ENCODE measurements at regions of chr12 and their contacts with region 1.

Region 1: GRCh38 chr12:49232940-49233841 is 31.7 kb upstream of the TUBA1C start:
- DNase-seq: no peak
- H3K4me3 ChIP-seq: peak overlapping the region in 1 of 2 donors; percentile 18
- H3K27ac ChIP-seq: peak overlapping the region; percentile 96
- H3K4me1 ChIP-seq: peaks cover 24% of the 10 kb centered on the region
- H3K27me3 ChIP-seq: no peaks in the 10 kb centered on the region
- CTCF ChIP-seq: no peak
- POLR2A ChIP-seq: no peak

Region 2: DNA sequence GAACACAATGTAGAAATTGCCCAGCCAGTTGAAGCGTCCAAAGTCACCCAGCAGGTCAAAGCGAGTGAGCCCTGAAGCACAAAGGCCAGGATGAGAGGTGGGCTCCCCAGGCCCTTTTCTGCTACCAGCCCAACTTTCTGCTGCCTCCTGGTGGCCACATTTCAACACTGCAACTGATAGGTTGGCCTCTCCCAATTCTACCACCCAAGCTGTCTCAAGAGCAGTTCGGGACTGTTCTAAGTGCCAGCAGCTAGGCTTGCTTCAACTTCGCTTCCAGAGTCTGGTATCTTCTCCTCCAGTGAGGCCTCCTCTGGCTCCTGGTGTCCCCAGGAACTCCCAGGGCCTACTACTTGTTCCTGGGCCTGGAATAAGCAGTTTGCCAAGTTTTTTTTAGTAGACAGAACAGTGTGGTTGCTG is 135.1 kb before region 1 on chr12:
- intact Hi-C with region 1: loop called (anchors 10 kb)
- DNase-seq: no peak
- H3K4me3 ChIP-seq: no peak overlapping the region
- H3K27ac ChIP-seq: no peak overlapping the region
- H3K4me1 ChIP-seq: peaks cover 21% of the 10 kb centered on the region
- H3K27me3 ChIP-seq: no peaks in the 10 kb centered on the region
- CTCF ChIP-seq: peak; percentile 36 to 64 (median 55)
- POLR2A ChIP-seq: no peak

Region 3: DNA sequence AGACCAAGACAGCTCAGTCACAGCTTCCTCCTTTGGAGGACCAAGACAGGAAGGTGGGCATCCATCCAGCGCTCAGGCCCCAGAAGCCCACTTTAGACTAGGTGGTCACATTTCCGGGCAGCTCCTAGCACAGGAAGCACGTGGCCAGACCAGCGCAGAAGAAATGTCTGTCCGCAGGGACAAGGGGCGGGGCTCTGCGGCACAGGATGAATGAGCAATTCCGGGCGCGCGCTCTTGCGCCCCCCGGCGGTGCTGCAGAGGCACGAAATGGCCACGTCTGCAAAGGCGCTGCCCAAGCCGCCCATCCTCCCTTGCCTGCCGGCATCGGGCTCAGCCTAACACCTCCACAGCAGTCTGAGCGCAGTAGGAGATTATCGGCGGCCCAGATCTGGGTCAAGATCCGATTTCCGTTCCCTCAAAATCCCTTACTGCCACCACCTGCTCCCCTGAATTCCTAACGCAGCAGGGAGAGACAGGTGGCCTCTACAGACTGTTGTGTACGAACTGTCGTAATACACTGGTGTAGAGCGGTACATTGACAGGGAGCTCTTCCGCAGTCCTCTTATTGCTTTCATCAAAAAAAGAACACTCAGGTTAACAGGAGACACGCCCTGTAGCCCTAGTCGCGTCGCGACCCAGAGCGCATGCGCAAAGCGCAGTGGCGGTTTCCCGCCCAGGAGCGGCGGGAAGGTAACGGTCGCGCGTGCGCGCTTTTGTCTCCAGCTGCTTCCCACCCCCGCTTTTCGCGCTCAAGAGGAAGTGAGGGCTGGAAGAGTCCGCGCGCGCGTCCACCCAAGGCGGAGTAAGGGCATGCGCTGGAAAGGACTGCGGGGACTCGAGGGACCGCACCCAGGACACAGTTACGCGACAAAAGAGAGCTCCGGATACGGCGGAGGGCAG is 102.8 kb before region 1 on chr12:
- intact Hi-C with region 1: loop called (anchors 2 kb)
- DNase-seq: peak in 1 of 2 donors; percentile 94
- H3K4me3 ChIP-seq: peak overlapping the region; percentile 83 to 92
- H3K27ac ChIP-seq: peak overlapping the region; percentile 98
- H3K4me1 ChIP-seq: peaks cover 36% of the 10 kb centered on the region
- H3K27me3 ChIP-seq: no peaks in the 10 kb centered on the region
- CTCF ChIP-seq: peak; percentile 61 to 81 (median 78)
- POLR2A ChIP-seq: peak in 1 of 2 donors; percentile 65

Region 4: DNA sequence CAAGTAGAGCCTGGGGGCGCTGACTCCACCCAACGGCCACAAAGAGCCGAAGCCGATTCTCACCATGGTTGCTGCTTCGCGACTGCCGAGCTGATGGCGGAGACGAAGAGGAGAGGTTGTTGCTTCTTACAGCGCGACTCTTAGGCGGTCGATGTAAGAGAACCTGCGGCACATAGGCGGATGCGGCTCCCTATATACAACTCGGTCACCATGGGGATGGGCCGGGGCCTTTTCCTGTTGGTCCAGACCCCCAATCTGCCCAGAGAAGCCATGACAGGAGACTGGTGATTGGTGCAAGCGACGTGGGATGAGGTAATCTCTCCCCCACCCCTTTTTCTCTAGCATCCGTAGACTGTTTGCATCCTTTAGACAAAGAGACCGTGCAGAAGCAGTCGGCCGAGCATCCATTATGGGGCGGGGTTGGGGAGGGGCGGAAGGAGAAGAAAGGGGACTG is 44.2 kb before region 1 on chr12 and contains the start of gene TUBA1A:
- intact Hi-C with region 1: loop called (anchors 5 kb)
- DNase-seq: peak in 1 of 2 donors; percentile 99
- H3K4me3 ChIP-seq: peak within 1 kb of the TSS; percentile 78 to 97
- H3K27ac ChIP-seq: peak within 1 kb of the TSS; percentile 99
- H3K4me1 ChIP-seq: peaks cover 14% of the 10 kb centered on the region
- H3K27me3 ChIP-seq: no peaks in the 10 kb centered on the region
- CTCF ChIP-seq: no peak
- POLR2A ChIP-seq: peak in 1 of 2 donors; percentile 94
- total RNA-seq, gene TUBA1A: 236 TPM

Region 5: GRCh38 chr12:50504798-50505385 is 1271.7 kb after region 1 on chr12 and contains the start of gene DIP2B:
- intact Hi-C with region 1: no loop called
- DNase-seq: peak in 1 of 2 donors; percentile 93
- H3K4me3 ChIP-seq: peak within 1 kb of the TSS; percentile 88 to 90
- H3K27ac ChIP-seq: peak within 1 kb of the TSS; percentile 98
- H3K4me1 ChIP-seq: peaks cover 47% of the 10 kb centered on the region
- H3K27me3 ChIP-seq: no peaks in the 10 kb centered on the region
- CTCF ChIP-seq: peak; percentile 97 to 98 (median 97)
- POLR2A ChIP-seq: peak in 1 of 2 donors; percentile 41
- total RNA-seq, gene DIP2B: 32.2 TPM

Measured in vagina (tissue), 2 donors.